B cell (primary cell): ENCODE measurements at regions of chr22 and their contacts with region 1.

Region 1: DNA sequence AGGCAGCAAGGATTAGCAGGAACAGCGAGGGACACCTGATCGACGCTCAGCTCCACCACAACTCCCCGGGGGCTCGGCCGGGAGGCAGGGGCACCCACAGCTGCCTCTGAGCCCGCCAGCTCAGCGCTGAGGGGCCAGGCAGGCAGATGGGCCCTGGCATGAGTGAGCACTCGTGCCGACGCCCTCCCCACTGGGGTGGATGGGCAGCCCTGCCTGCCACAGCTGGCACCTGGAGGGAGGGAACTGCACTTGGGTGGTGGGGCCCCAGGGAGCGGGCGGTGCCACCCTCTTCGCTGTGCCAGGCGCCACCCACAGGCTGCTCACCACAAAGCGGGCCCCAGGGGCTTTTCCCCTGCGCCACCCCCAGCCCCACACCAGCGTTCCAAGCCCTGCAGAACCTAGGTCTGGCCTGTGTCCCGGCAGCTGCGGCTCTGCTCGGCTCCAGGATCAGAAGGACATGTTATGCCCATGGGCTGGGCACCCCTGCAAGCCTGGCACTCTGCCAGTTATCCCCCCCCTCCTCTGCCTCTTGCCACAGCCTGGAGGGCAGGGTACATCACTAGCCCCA is 28.8 kb downstream of the WNT7B start:
- DNase-seq: peak; percentile 79
- ATAC-seq: peak; percentile 90
- H3K4me3 ChIP-seq: peak overlapping the region in 1 of 5 experiments; percentile 17
- H3K4me3 Mint-ChIP-seq: peak overlapping the region; percentile 69
- H3K27ac ChIP-seq: no peak overlapping the region
- H3K27ac Mint-ChIP-seq: peak overlapping the region; percentile 41
- H3K4me1 ChIP-seq: peaks cover 20 to 31% of the 10 kb centered on the region in 2 donors
- H3K4me1 Mint-ChIP-seq: peaks cover 38% of the 10 kb centered on the region
- H3K27me3 ChIP-seq: peaks cover 0 to 11% (median 2%) of the 10 kb centered on the region in 4 experiments
- H3K27me3 Mint-ChIP-seq: peaks cover 4% of the 10 kb centered on the region
- CTCF ChIP-seq: no peak

Region 2: DNA sequence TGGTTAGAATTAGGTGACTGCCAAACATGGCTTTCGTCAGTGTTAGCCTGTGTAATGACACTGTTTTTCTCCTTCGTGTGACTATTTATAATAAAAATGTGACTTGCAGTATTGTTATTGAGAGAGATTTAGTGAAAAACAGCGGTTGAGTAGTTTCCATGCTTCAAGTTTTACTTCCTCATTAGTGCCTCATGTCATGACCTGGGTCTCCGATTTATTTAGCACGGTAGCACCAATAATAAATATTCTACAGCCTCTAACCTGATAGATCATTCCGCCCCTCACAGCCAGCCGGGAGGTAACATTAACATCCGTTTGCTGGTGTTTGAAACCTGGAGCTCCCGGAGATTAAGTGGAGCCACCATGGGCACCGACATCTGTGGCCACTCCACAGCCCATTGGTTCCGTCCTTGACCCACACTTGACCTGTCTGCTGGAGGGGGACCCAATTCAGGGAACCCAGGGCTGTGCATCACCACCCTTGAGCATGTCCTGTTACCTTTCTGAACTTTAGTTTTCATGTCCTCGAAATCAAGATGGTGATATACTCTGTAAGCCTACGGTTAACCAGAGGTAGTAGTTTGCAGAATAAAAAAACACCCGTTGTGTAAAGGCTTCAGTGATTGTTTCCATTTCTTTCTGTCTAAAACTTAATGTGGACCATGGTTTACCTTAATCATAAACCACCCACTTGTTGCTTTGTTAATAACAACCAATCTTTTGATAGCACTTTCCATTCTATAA is 172.4 kb before region 1 on chr22:
- CTCF ChIA-PET with region 1: no interaction called
- POLR2A ChIA-PET with region 1: no interaction called
- intact Hi-C with region 1: loop called (anchors 10 kb)
- DNase-seq: peak; percentile 63
- ATAC-seq: peak; percentile 84
- H3K4me3 ChIP-seq: peak overlapping the region in 2 of 5 experiments; percentile 2 to 28
- H3K4me3 Mint-ChIP-seq: peak overlapping the region; percentile 71
- H3K27ac ChIP-seq: peak overlapping the region; percentile 25 to 61
- H3K27ac Mint-ChIP-seq: peak overlapping the region; percentile 86
- H3K4me1 ChIP-seq: peaks cover 46 to 51% of the 10 kb centered on the region in 2 donors
- H3K4me1 Mint-ChIP-seq: peaks cover 64% of the 10 kb centered on the region
- H3K27me3 ChIP-seq: no peaks in the 10 kb centered on the region
- H3K27me3 Mint-ChIP-seq: no peaks in the 10 kb centered on the region
- CTCF ChIP-seq: no peak

Region 3: GRCh38 chr22:45911601-45912271 is 36.4 kb before region 1 on chr22:
- CTCF ChIA-PET with region 1: no interaction called
- POLR2A ChIA-PET with region 1: no interaction called
- intact Hi-C with region 1: no loop called
- DNase-seq: no peak
- ATAC-seq: no peak
- H3K4me3 ChIP-seq: no peak overlapping the region
- H3K4me3 Mint-ChIP-seq: no peak overlapping the region
- H3K27ac ChIP-seq: no peak overlapping the region
- H3K27ac Mint-ChIP-seq: no peak overlapping the region
- H3K4me1 ChIP-seq: no peaks in the 10 kb centered on the region
- H3K4me1 Mint-ChIP-seq: no peaks in the 10 kb centered on the region
- H3K27me3 ChIP-seq: no peaks in the 10 kb centered on the region
- H3K27me3 Mint-ChIP-seq: peaks cover 12% of the 10 kb centered on the region
- CTCF ChIP-seq: no peak

Region 4: DNA sequence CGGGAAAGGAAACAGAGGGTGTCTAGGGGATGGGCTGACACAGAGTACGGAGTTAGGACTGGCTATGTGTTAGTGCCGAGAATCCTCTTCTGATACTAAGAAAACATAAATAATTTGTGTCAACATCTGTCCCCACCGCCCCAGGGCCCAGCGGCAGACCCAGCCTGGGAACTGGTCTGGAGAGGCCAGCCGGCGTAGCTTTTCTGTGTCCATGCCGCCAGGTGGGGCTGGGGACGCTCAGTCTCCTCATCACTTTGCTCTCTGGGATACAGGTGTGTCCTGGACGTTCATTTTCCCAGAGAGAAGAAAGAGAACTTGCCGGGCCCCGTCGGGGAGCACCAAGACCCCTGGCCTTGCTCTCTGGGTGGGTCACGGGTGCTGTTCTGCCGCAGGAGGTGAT is 25.9 kb before region 1 on chr22:
- CTCF ChIA-PET with region 1: no interaction called
- POLR2A ChIA-PET with region 1: no interaction called
- intact Hi-C with region 1: no loop called
- DNase-seq: no peak
- ATAC-seq: no peak
- H3K4me3 ChIP-seq: no peak overlapping the region
- H3K4me3 Mint-ChIP-seq: no peak overlapping the region
- H3K27ac ChIP-seq: no peak overlapping the region
- H3K27ac Mint-ChIP-seq: no peak overlapping the region
- H3K4me1 ChIP-seq: no peaks in the 10 kb centered on the region
- H3K4me1 Mint-ChIP-seq: peaks cover 2% of the 10 kb centered on the region
- H3K27me3 ChIP-seq: peaks cover 0 to 4% (median 0%) of the 10 kb centered on the region in 4 experiments
- H3K27me3 Mint-ChIP-seq: peaks cover 6% of the 10 kb centered on the region
- CTCF ChIP-seq: no peak